ENCODE measurements at regions of chr17 and their contacts with region 1.

Region 1: DNA sequence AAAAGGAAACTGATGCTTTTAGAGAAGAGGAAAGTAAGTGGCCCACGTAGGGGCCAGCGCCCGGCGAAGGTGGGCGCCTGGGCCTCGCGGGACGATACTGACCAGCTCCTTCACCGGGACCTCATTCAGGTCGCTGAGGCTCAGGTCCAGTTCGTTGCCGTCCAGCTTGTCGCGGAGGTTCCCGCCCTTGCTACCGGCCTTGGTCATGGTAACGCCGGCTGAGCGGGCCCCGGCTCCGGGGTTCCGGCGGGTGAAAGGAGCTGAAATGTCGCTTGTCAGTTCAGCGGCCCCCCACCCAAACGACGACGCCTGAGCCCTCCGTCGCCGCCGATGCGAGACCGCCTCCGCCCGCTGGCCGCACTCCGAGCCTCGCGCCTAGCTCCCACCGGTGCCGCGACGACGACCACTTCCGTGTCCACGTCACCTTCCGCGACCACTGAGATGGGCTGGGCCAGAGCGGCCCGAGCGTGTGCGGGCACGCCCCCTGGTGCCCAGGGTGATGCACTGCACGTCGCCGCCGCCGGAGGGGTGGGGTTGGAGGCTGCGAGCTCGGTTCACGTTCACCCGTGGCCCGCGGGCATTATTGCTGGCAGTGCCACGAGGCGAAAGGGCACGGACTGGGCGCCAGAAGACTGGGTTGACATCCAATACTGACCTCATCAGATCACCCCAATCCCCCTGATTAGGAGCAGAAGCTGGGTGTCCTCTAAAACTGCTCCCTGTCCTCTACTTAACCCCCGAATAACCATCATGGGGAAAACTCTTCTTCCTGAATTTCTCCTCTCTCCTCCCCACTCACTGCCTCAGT is at the start of gene LRRC59:
- DNase-seq: peak; percentile 77
- ATAC-seq: peak; percentile 95
- H3K4me3 ChIP-seq: peak within 1 kb of the TSS; percentile 95
- H3K27ac ChIP-seq: peak within 1 kb of the TSS; percentile 77
- H3K4me1 ChIP-seq: peaks cover 7 to 27% of the 10 kb centered on the region in 2 experiments
- H3K27me3 ChIP-seq: no peaks in the 10 kb centered on the region
- CTCF ChIP-seq: peak; percentile 83 to 99 (median 94)
- POLR2A ChIP-seq: peak; percentile 71
- RAD21 ChIP-seq: peak; percentile 39; the same call in 1 of the 2 replicates
- total RNA-seq, gene LRRC59: 221 TPM

Region 2: GRCh38 chr17:50288306-50288705 is 109.0 kb before region 1 on chr17:
- CTCF ChIA-PET with region 1: no interaction called
- POLR2A ChIA-PET with region 1: no interaction called
- RAD21 ChIA-PET with region 1: no interaction called
- intact Hi-C with region 1: no loop called
- DNase-seq: no peak
- ATAC-seq: no peak
- H3K4me3 ChIP-seq: no peak overlapping the region
- H3K27ac ChIP-seq: no peak overlapping the region
- H3K4me1 ChIP-seq: peaks cover 0 to 13% of the 10 kb centered on the region in 2 experiments; a peak in 2 of 4 replicates
- H3K27me3 ChIP-seq: no peaks in the 10 kb centered on the region
- CTCF ChIP-seq: no peak
- POLR2A ChIP-seq: no peak
- RAD21 ChIP-seq: no peak

Region 3: DNA sequence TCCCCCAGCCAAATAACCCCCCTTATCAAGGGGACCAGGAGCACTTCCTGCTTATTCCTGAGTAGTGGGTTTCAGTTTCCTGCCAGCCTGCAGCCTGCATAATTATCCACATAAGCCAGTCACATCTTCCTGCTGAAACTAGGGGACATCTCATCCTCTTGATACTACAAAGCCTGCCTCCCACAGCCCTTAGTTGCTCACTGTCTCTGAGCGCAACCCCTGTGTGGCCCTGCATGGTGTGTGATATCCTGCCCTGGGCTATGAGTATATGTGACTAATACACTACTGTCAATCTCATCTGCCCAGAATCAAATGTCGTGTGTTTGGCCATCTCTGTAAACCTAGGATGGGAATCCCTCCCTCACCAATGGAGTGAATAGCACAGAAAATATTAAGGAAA is 59.3 kb before region 1 on chr17:
- CTCF ChIA-PET with region 1: no interaction called
- POLR2A ChIA-PET with region 1: no interaction called
- RAD21 ChIA-PET with region 1: no interaction called
- intact Hi-C with region 1: no loop called
- DNase-seq: no peak
- ATAC-seq: peak; percentile 42; the same call in 1 of the 2 replicates
- H3K4me3 ChIP-seq: no peak overlapping the region
- H3K27ac ChIP-seq: no peak overlapping the region
- H3K4me1 ChIP-seq: peaks cover 0 to 4% of the 10 kb centered on the region in 2 experiments; a peak in 2 of 4 replicates
- H3K27me3 ChIP-seq: no peaks in the 10 kb centered on the region
- CTCF ChIP-seq: no peak
- POLR2A ChIP-seq: no peak
- RAD21 ChIP-seq: no peak

Region 4: GRCh38 chr17:50361561-50362480 is 35.5 kb before region 1 on chr17:
- CTCF ChIA-PET with region 1: interaction called, 11 read pairs
- POLR2A ChIA-PET with region 1: interaction called, 9 read pairs
- RAD21 ChIA-PET with region 1: no interaction called
- intact Hi-C with region 1: no loop called
- DNase-seq: peak; percentile 60
- ATAC-seq: peak; percentile 83
- H3K4me3 ChIP-seq: no peak overlapping the region
- H3K27ac ChIP-seq: peak overlapping the region; percentile 16
- H3K4me1 ChIP-seq: peaks cover 3 to 8% of the 10 kb centered on the region in 2 experiments; a peak in 2 of 4 replicates
- H3K27me3 ChIP-seq: no peaks in the 10 kb centered on the region
- CTCF ChIP-seq: peak; percentile 87 to 97 (median 94)
- POLR2A ChIP-seq: no peak
- RAD21 ChIP-seq: no peak; the same call in 1 of the 2 replicates

Region 5: DNA sequence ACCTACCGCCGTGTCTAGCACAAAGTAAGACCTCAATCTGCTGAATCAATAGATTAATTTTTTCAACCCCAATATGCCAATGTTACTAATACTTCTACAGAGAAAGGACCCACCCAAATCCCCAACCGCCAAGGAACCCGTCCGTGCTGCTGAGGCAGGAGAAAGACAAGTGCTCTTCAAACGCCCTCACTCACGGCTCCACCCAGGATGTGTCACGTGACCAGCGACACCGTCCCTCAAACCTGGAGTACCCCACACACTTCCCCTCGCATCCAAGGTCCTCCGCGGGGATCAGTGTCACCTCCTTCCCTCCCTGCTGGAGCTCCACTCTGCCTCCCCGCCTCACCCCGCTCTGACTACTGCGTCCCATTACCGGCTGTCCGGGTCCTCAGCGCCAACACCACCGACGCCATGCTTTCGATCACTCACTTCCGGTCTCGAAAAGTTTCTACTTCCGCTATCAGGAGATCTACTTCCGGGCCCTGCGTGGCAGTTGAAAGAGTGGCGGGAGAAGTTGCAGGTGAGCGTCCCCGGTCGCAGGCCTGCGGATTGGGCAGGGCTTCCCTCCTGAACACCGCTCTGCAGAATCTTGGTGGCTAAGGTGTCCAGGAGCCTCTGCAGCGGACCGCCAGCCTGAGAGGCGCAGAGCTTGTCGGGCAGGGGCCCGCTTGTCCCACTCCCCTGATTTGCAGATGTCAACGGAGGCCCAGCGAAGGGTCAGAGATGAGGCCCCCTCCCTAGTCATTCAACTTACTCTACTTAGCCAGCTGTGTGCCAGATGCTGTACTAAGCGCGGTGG is 24.4 kb before region 1 on chr17 and contains the starts of genes EME1 and MRPL27:
- CTCF ChIA-PET with region 1: interaction called, 7 read pairs
- POLR2A ChIA-PET with region 1: interaction called, 12 read pairs
- RAD21 ChIA-PET with region 1: no interaction called
- intact Hi-C with region 1: no loop called
- DNase-seq: peak; percentile 90
- ATAC-seq: peak; percentile 88
- H3K4me3 ChIP-seq: peak within 1 kb of the TSS; percentile 54 to 67
- H3K27ac ChIP-seq: peak within 1 kb of the TSS; percentile 82
- H3K4me1 ChIP-seq: peaks cover 9 to 16% of the 10 kb centered on the region in 2 experiments
- H3K27me3 ChIP-seq: no peaks in the 10 kb centered on the region
- CTCF ChIP-seq: no peak
- POLR2A ChIP-seq: peak; percentile 95
- RAD21 ChIP-seq: no peak
- total RNA-seq, gene EME1: 31.8 TPM
- total RNA-seq, gene MRPL27: 106 TPM

Region 6: GRCh38 chr17:50380369-50381259 is 16.7 kb before region 1 on chr17:
- CTCF ChIA-PET with region 1: interaction called, 13 read pairs
- POLR2A ChIA-PET with region 1: interaction called, 6 read pairs
- RAD21 ChIA-PET with region 1: no interaction called
- intact Hi-C with region 1: no loop called
- DNase-seq: no peak
- ATAC-seq: peak; percentile 65
- H3K4me3 ChIP-seq: no peak overlapping the region
- H3K27ac ChIP-seq: no peak overlapping the region
- H3K4me1 ChIP-seq: no peaks in the 10 kb centered on the region
- H3K27me3 ChIP-seq: no peaks in the 10 kb centered on the region
- CTCF ChIP-seq: peak in 2 of 3 experiments; percentile 27 to 53; a peak in 3 of 6 replicates
- POLR2A ChIP-seq: no peak
- RAD21 ChIP-seq: no peak

Region 7: GRCh38 chr17:50386510-50386909 is 10.8 kb before region 1 on chr17:
- CTCF ChIA-PET with region 1: interaction called, 13 read pairs
- POLR2A ChIA-PET with region 1: interaction called, 6 read pairs
- RAD21 ChIA-PET with region 1: no interaction called
- intact Hi-C with region 1: no loop called
- DNase-seq: no peak
- ATAC-seq: no peak
- H3K4me3 ChIP-seq: no peak overlapping the region
- H3K27ac ChIP-seq: no peak overlapping the region
- H3K4me1 ChIP-seq: no peaks in the 10 kb centered on the region
- H3K27me3 ChIP-seq: no peaks in the 10 kb centered on the region
- CTCF ChIP-seq: no peak
- POLR2A ChIP-seq: no peak
- RAD21 ChIP-seq: no peak

Region 8: GRCh38 chr17:50425682-50426471 is 28.6 kb after region 1 on chr17 and contains the start of gene ACSF2:
- CTCF ChIA-PET with region 1: interaction called, 20 read pairs
- POLR2A ChIA-PET with region 1: interaction called, 14 read pairs
- RAD21 ChIA-PET with region 1: no interaction called
- intact Hi-C with region 1: no loop called
- DNase-seq: no peak
- ATAC-seq: peak; percentile 76
- H3K4me3 ChIP-seq: peak within 1 kb of the TSS; percentile 63 to 73
- H3K27ac ChIP-seq: peak within 1 kb of the TSS; percentile 73
- H3K4me1 ChIP-seq: peaks cover 31 to 50% of the 10 kb centered on the region in 2 experiments
- H3K27me3 ChIP-seq: no peaks in the 10 kb centered on the region
- CTCF ChIP-seq: no peak
- POLR2A ChIP-seq: no peak
- RAD21 ChIP-seq: no peak
- total RNA-seq, gene ACSF2: 52.4 TPM